ENCODE measurements at regions of chr6 and their contacts with region 1.

Region 1: GRCh38 chr6:82006027-82006738 is 241.4 kb downstream of the IBTK start:
- DNase-seq: no peak
- H3K4me3 ChIP-seq: no peak overlapping the region
- CTCF ChIP-seq: peak; percentile 39

Region 2: GRCh38 chr6:81625216-81625615 is 381.0 kb before region 1 on chr6:
- CTCF ChIA-PET with region 1: no interaction called
- POLR2A ChIA-PET with region 1: no interaction called
- DNase-seq: no peak
- H3K4me3 ChIP-seq: no peak overlapping the region
- CTCF ChIP-seq: no peak

Region 3: DNA sequence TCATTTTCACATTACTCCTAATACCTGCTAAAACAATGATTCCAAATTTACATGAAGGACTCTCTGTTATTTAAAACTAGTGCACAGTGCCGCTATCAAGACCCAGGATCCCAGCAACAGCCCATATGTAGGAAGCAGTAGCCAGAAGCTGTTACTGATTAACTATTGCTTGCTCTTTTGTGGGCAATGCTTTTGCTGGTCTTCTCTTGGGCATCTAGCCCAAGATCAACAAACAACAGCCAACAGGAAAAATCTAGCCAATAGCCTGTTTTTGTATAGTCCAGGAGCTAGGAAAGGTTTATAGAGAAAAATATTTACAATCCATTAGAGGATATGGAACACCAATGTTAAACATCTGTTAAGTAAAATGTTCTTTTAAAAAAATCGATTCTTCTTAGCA is 231.6 kb before region 1 on chr6:
- CTCF ChIA-PET with region 1: no interaction called
- POLR2A ChIA-PET with region 1: no interaction called
- DNase-seq: no peak
- H3K4me3 ChIP-seq: no peak overlapping the region
- CTCF ChIP-seq: no peak

Region 4: DNA sequence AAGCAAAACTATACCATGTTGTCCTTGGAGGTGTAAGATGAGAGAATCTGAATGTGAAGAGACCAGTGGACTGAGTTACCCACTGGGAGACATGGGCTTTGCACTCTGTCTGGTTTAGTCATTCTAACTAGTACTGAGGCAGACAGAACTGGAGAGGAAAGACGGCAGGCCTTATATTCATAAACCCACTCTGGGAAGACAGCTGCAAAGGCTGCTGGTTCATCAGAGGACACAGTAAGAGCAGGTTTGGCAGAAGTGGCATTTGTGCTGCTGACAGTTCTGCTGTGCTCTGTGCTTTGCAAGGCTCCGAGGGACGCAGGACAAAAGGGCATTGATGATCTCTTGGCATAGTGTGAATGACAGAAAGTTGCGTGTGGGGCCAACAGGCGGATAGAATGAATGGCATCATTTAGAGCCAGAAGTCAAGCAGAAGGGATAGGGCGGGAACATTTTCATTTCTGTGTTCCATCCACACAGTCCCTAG is 111.4 kb before region 1 on chr6:
- CTCF ChIA-PET with region 1: interaction called, 11 read pairs
- POLR2A ChIA-PET with region 1: interaction called, 3 read pairs
- DNase-seq: no peak
- H3K4me3 ChIP-seq: no peak overlapping the region
- CTCF ChIP-seq: no peak

Region 5: DNA sequence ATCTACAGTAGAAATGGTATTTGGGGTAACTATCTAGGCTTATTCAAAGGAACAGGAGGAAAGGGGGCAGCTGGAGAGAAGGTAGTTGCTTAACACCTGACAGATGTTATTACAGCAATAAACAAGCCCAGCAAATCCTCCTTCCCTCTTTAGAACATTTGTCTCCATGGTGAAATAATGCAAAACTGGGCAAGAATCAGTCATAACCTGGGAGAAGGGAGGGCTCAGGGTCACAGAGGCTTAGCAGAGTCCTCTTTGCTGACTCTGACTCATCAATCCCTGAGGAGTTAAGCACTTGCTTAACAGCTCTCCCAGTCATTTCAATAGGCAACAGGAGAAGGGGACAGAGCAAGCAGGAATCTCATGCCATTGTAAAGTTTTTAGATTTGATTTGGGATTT is 11.1 kb after region 1 on chr6:
- CTCF ChIA-PET with region 1: interaction called, 13 read pairs
- POLR2A ChIA-PET with region 1: no interaction called
- DNase-seq: no peak
- H3K4me3 ChIP-seq: no peak overlapping the region
- CTCF ChIP-seq: no peak

Region 6: DNA sequence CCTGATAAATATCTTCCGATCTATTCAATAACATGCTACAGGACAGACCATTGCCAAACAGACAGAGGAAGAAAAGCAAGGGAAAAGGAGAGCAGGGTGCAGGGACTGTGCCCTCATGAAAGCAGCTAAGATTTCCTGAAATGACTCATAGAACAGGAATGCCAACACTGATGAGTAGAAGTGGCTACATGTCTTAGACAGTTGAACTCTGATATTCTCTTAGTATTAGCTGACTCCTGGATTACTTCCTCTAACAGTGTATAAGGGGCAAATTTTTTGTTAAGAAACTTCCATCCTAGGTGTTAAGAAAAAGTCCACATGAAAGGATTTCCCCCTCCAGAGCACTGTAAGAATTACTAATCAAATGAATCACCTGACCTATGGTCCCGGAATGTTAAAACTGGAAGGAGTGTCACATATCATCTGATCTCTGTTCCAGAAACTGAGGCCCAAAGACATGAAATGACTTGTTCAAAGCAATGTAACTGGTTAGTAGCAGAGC is 16.5 kb after region 1 on chr6:
- CTCF ChIA-PET with region 1: interaction called, 13 read pairs
- POLR2A ChIA-PET with region 1: no interaction called
- DNase-seq: no peak
- H3K4me3 ChIP-seq: no peak overlapping the region
- CTCF ChIP-seq: no peak

Region 7: GRCh38 chr6:82033631-82034211 is 27.5 kb after region 1 on chr6:
- CTCF ChIA-PET with region 1: interaction called, 12 read pairs
- POLR2A ChIA-PET with region 1: no interaction called
- DNase-seq: no peak
- H3K4me3 ChIP-seq: no peak overlapping the region
- CTCF ChIP-seq: no peak

Region 8: DNA sequence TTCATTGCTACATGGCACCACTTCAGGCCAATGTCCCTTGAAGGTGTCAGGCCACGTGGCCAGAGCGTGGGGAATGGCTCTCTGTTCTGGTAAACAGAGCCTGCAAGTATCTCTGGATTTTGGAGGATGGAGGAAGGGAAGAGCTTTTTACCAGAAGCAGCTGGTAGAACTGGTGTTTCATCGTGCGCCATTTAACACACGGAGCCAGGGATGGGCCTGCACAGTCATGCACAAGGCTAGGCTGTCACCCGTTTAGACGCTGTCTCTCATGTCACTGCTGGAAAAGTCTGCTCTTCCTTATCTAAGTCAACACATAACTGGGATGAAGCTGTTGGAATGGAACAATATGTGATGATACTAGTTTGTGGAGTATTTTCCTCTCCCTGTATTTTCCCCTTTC is 117.4 kb after region 1 on chr6:
- CTCF ChIA-PET with region 1: no interaction called
- POLR2A ChIA-PET with region 1: no interaction called
- DNase-seq: no peak
- H3K4me3 ChIP-seq: no peak overlapping the region
- CTCF ChIP-seq: no peak